ENCODE measurements at regions of chr14 and their contacts with region 1.

Region 1: GRCh38 chr14:67446120-67447032 is 34.4 kb upstream of the PLEK2 start:
- DNase-seq: no peak
- ATAC-seq: no peak
- H3K4me3 ChIP-seq: no peak overlapping the region
- H3K27ac ChIP-seq: no peak overlapping the region
- H3K4me1 ChIP-seq: no peaks in the 10 kb centered on the region
- H3K27me3 ChIP-seq: no peaks in the 10 kb centered on the region
- CTCF ChIP-seq: no peak
- POLR2A ChIP-seq: no peak

Region 2: DNA sequence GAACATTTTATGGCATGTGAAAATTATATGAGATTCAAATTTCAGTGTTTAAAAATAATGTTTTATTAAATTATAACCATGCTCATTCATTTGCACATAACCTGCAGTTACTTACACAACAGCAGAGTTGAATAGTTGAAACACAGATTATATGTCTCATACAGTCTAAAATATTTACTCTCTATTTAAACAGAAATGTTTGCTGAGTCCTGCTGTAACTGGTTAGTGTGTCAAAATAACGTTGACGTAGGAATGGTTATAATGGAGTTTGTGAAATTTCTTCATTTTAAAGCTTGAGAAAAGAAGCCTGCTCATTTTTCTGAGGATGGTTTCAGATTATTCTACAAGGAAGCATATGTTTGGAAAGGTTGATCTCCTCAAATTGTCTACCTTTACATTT is 453.6 kb before region 1 on chr14:
- in situ Hi-C with region 1: no loop called
- intact Hi-C with region 1: no loop called
- DNase-seq: no peak
- ATAC-seq: no peak
- H3K4me3 ChIP-seq: no peak overlapping the region
- H3K27ac ChIP-seq: no peak overlapping the region
- H3K4me1 ChIP-seq: no peaks in the 10 kb centered on the region
- H3K27me3 ChIP-seq: no peaks in the 10 kb centered on the region
- CTCF ChIP-seq: no peak
- POLR2A ChIP-seq: no peak

Region 3: DNA sequence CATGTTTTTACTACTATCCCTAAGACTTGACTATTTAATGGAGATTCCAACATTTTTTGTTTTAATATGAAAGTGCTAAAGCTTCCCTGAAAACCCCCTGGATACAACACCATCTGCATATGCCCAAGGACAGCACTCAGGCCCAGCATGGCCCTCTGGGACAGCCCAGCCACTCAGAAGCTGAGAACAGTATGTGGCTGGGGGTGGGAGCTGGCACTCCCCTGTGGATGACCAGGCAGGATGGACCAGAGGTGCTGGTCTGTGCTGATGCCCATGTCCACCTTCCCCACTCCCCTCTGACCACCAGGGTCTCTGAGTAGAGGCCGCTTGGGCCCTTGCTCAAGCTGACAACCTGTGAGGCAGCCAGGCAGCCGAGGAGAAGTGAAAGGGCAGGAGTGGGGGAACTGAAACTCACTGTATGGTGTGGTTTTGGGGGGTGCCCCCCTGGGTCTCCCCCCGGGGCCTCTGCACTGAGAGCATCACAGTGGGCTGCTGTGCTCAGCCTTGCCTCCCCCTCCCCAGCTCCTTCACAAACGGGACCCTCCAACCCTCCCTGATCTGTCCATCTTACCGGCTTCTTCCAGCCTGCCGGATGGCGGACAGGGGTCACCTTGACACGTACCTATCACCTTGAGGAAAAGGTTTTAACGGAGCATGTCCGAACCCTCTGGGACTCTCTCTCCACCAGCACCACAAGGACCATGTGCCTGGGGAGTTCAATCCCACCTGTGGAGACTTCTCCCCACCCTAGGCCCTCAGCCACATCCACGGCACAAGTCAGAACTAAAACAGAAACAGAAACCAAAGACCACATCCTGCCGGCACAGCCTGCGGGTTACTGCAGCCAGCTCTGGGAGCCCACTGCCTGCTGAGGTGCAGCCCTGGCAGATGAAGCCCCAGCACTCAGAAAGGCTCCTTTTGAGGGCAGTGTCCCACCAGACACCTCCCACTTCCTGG is 41.8 kb after region 1 on chr14 and contains the start of gene TMEM229B:
- in situ Hi-C with region 1: no loop called
- intact Hi-C with region 1: loop called (anchors 5 kb)
- DNase-seq: no peak
- ATAC-seq: no peak
- H3K4me3 ChIP-seq: peak within 1 kb of the TSS; percentile 2 to 47 (median 25)
- H3K27ac ChIP-seq: peak within 1 kb of the TSS; percentile 42 to 60 (median 54)
- H3K4me1 ChIP-seq: peaks cover 18 to 19% of the 10 kb centered on the region in 2 donors
- H3K27me3 ChIP-seq: no peaks in the 10 kb centered on the region
- CTCF ChIP-seq: no peak
- POLR2A ChIP-seq: no peak
- total RNA-seq, gene TMEM229B: 0.07 to 3.3 (median 0.20) TPM in 3 of 4 donors, not detected in the other

Measured in gastrocnemius medialis (tissue), 4 donors.